Ovary (tissue), 10 donors: ENCODE measurements at regions of chr10 and their contacts with region 1.

Region 1: GRCh38 chr10:29735596-29736318 is 101.0 kb upstream of the SVIL start:
- DNase-seq: peak; percentile 89 to 94 (median 92)
- H3K4me3 ChIP-seq: peak overlapping the region; percentile 88
- H3K27ac ChIP-seq: peak overlapping the region; percentile 98 to 99
- H3K4me1 ChIP-seq: peaks cover 10% of the 10 kb centered on the region
- H3K27me3 ChIP-seq: no peaks in the 10 kb centered on the region
- CTCF ChIP-seq: peak; percentile 96 to 98 (median 98)
- EP300 ChIP-seq: no peak
- POLR2A ChIP-seq: peak; percentile 73

Region 2: GRCh38 chr10:27805180-27805579 is 1930.6 kb before region 1 on chr10:
- intact Hi-C with region 1: no loop called
- DNase-seq: peak in 2 of 5 donors; percentile 16 to 52
- H3K4me3 ChIP-seq: no peak overlapping the region
- H3K27ac ChIP-seq: peak overlapping the region in 1 of 2 donors; percentile 30
- H3K4me1 ChIP-seq: peaks cover 7% of the 10 kb centered on the region
- H3K27me3 ChIP-seq: no peaks in the 10 kb centered on the region
- CTCF ChIP-seq: no peak
- EP300 ChIP-seq: no peak
- POLR2A ChIP-seq: no peak

Region 3: DNA sequence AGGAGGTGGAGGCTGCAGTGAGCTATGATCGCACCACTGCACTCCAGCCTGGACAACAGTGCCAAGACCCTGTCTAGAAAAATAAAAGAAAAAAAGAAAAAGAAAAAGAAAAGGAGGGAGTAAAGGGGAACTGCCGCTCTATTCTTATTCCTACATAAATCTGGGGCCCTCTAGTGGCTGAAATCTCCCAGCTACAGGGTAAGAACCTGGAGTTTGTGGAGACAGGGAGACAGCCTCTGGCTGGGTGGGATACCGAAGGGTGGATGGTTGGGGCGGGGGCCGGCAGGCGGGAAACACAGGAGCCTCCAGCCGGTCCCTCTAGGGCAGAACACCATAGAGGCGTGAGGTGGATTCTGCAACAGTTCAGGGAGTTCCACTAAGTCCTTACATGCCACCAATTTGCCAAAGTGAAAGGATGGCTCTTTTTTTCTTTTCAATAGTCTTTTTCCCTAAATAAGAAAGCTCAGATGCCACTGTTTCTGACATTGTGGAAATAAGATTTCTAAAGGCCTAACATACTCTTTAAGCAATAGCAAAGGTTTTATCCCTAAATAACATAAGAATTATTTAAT is 218.3 kb before region 1 on chr10:
- intact Hi-C with region 1: loop called in 2 of 4 experiments (anchors 5 to 10 kb)
- DNase-seq: peak in 3 of 5 donors; percentile 30 to 43 (median 37)
- H3K4me3 ChIP-seq: no peak overlapping the region
- H3K27ac ChIP-seq: no peak overlapping the region
- H3K4me1 ChIP-seq: peaks cover 1% of the 10 kb centered on the region
- H3K27me3 ChIP-seq: no peaks in the 10 kb centered on the region
- CTCF ChIP-seq: peak; percentile 29 to 39 (median 31)
- EP300 ChIP-seq: no peak
- POLR2A ChIP-seq: no peak

Region 4: GRCh38 chr10:29590915-29591650 is 144.7 kb before region 1 on chr10:
- intact Hi-C with region 1: loop called in 2 of 4 experiments (anchors 5 to 10 kb)
- DNase-seq: no peak
- H3K4me3 ChIP-seq: no peak overlapping the region
- H3K27ac ChIP-seq: peak overlapping the region in 1 of 2 donors; percentile 52
- H3K4me1 ChIP-seq: peaks cover 20% of the 10 kb centered on the region
- H3K27me3 ChIP-seq: no peaks in the 10 kb centered on the region
- CTCF ChIP-seq: no peak
- EP300 ChIP-seq: no peak
- POLR2A ChIP-seq: no peak

Region 5: DNA sequence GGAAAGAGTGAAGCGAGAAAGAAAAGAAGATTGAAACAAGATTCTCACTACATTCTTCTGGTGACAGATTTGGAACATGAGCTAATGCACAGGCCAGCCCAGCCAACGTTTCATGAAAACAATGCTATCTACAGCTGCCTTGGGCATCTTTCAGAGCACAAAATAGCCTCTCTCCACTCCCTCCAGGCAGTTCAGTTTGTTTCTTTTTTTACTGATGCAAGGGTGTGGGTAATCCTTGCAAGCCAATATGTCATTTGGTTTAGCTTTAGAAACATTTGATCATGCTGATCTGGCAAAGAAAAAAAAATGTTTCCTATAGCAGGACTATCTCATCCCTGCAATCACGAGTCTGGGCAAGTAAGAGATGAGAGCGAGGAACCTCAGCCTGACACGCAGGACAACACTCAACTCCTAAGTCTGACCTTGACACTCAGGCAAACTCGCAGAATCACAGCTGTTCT is 136.9 kb before region 1 on chr10:
- intact Hi-C with region 1: loop called in 2 of 4 experiments (anchors 5 to 10 kb)
- DNase-seq: peak in 4 of 5 donors; percentile 63 to 71 (median 67)
- H3K4me3 ChIP-seq: peak overlapping the region; percentile 9
- H3K27ac ChIP-seq: peak overlapping the region; percentile 63 to 85
- H3K4me1 ChIP-seq: peaks cover 37% of the 10 kb centered on the region
- H3K27me3 ChIP-seq: no peaks in the 10 kb centered on the region
- CTCF ChIP-seq: peak in 1 of 3 donors; percentile 8
- EP300 ChIP-seq: no peak
- POLR2A ChIP-seq: no peak

Region 6: GRCh38 chr10:29646238-29646902 is 89.4 kb before region 1 on chr10:
- intact Hi-C with region 1: loop called in 2 of 4 experiments (anchors 10 kb)
- DNase-seq: peak in 1 of 5 donors; percentile 54
- H3K4me3 ChIP-seq: no peak overlapping the region
- H3K27ac ChIP-seq: peak overlapping the region; percentile 9 to 75
- H3K4me1 ChIP-seq: peaks cover 43% of the 10 kb centered on the region
- H3K27me3 ChIP-seq: no peaks in the 10 kb centered on the region
- CTCF ChIP-seq: no peak
- EP300 ChIP-seq: no peak
- POLR2A ChIP-seq: no peak

Region 7: GRCh38 chr10:29849126-29849833 is 113.5 kb after region 1 on chr10:
- intact Hi-C with region 1: loop called in 1 of 4 experiments (anchors 5 kb)
- DNase-seq: no peak
- H3K4me3 ChIP-seq: no peak overlapping the region
- H3K27ac ChIP-seq: peak overlapping the region in 1 of 2 donors; percentile 10
- H3K4me1 ChIP-seq: no peaks in the 10 kb centered on the region
- H3K27me3 ChIP-seq: no peaks in the 10 kb centered on the region
- CTCF ChIP-seq: no peak
- EP300 ChIP-seq: no peak
- POLR2A ChIP-seq: no peak

Region 8: GRCh38 chr10:29857843-29858701 is 122.3 kb after region 1 on chr10:
- intact Hi-C with region 1: loop called in 2 of 4 experiments (anchors 5 to 10 kb)
- DNase-seq: peak; percentile 65 to 77 (median 69)
- H3K4me3 ChIP-seq: no peak overlapping the region
- H3K27ac ChIP-seq: no peak overlapping the region
- H3K4me1 ChIP-seq: no peaks in the 10 kb centered on the region
- H3K27me3 ChIP-seq: no peaks in the 10 kb centered on the region
- CTCF ChIP-seq: peak in 2 of 3 donors; percentile 57 to 61
- EP300 ChIP-seq: no peak
- POLR2A ChIP-seq: no peak

Region 9: DNA sequence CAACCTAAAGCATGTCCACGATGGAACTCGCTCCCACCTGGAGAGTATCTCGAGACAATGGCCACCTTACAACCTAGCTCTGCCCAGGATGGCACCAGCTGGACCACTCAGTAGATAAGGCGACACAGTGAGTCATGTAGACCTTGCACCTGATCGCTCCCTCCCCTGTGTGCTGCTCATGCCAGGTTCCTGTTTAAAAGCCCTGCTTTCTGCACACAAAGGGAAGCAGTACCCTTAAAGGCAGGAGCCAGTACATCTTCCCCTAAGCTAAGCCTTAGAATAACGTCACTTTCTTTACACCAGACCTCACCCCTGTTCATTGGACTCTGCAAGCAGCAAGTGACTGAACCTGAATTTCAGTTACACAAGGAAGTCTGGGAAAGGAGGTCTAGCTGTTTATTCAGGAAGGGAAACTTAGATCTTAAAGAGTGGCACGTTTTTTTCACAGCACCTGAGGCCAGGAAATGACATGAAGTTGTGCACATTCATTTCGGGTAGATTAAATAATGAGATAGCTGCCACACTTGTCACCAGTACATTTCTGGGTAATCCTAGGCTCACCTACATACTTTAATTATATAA is 495.4 kb after region 1 on chr10:
- intact Hi-C with region 1: no loop called
- DNase-seq: no peak
- H3K4me3 ChIP-seq: no peak overlapping the region
- H3K27ac ChIP-seq: no peak overlapping the region
- H3K4me1 ChIP-seq: no peaks in the 10 kb centered on the region
- H3K27me3 ChIP-seq: no peaks in the 10 kb centered on the region
- CTCF ChIP-seq: no peak
- EP300 ChIP-seq: no peak
- POLR2A ChIP-seq: no peak